Activated CD8-positive, alpha-beta T cell treated with anti-CD3 and anti-CD28 coated beads for 36 hours (primary cell): ENCODE measurements at regions of chr20 and their contacts with region 1.

Region 1: DNA sequence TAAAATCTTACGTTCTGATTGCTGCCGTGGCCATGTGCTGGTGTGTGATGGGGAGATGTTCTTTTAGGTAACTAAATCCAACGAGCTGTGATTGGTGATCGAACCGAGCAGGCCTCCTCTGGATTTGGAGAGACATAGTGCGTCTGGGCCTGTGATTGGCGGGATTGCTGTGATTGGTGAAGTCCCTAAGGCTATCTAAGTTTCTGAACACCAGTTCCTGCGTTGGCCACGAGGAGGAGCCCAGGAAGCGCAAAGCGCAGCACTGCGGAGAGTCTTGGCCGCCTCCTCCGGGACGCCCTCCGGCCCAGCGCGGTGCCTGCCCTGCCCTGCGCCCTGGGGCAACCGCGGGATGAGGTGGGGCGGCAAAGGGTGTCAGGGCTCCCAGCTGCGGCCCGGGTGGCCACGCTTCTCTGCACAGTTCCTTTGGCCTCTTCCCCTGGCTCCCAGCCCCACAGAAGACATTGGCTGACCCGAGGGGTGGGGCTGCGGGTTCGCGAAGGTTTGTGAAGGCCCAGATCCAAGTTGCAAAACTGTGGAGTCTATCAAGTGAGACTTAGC is 33.0 kb downstream of the HNF4A start:
- DNase-seq: peak; percentile 89
- ATAC-seq: peak; percentile 93
- H3K4me3 Mint-ChIP-seq: no peak overlapping the region
- H3K27ac Mint-ChIP-seq: no peak overlapping the region
- H3K4me1 Mint-ChIP-seq: peaks cover 2% of the 10 kb centered on the region
- H3K27me3 Mint-ChIP-seq: peaks cover 6% of the 10 kb centered on the region
- CTCF ChIP-seq: peak; percentile 91

Region 2: GRCh38 chr20:44370639-44371220 is 17.8 kb before region 1 on chr20:
- CTCF ChIA-PET with region 1: interaction called, 10 read pairs
- POLR2A ChIA-PET with region 1: interaction called, 3 read pairs
- intact Hi-C with region 1: no loop called
- DNase-seq: no peak
- ATAC-seq: no peak
- H3K4me3 Mint-ChIP-seq: no peak overlapping the region
- H3K27ac Mint-ChIP-seq: no peak overlapping the region
- H3K4me1 Mint-ChIP-seq: no peaks in the 10 kb centered on the region
- H3K27me3 Mint-ChIP-seq: no peaks in the 10 kb centered on the region
- CTCF ChIP-seq: no peak

Region 3: GRCh38 chr20:44431502-44432234 is 43.1 kb after region 1 on chr20:
- CTCF ChIA-PET with region 1: no interaction called
- POLR2A ChIA-PET with region 1: no interaction called
- intact Hi-C with region 1: no loop called
- DNase-seq: no peak
- ATAC-seq: no peak
- H3K4me3 Mint-ChIP-seq: no peak overlapping the region
- H3K27ac Mint-ChIP-seq: no peak overlapping the region
- H3K4me1 Mint-ChIP-seq: no peaks in the 10 kb centered on the region
- H3K27me3 Mint-ChIP-seq: peaks cover 6% of the 10 kb centered on the region
- CTCF ChIP-seq: no peak

Region 4: DNA sequence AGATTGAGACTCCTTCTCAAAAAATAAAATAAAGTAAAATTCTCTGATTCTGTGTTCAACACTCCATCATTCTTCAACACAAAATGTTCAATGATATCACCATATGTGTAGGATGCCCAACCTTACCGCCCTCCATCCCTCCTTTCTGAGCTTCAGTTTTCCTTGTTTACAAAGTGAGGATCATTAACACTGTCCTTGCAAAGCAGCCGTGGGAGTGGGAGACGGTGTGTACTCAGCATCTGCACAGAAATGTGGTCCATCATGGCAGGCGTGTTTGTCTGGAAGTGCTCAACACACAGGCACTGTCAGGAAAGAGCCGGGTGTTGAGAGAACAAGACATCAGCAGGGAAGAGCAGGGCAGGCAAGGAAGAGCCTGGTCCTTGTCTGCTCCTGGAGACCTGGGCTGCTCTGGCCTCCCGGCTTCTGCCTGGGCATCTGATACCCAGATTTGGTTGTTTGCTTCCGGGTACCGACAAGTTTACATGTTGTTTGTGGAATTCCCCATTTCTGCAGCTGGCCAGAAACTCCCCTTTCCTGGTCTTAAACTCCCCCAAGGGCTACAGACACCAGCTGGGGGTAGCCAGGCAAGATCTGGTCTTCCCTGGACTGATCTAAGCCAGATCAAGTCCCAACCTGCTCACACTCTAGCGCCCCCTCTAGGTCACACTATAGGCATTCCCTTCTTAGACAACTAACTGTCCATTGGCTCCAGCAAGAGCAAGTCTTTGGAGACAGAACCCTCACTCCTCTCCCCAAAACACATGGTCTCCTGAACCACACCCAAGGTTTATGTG is 60.4 kb after region 1 on chr20:
- CTCF ChIA-PET with region 1: no interaction called
- POLR2A ChIA-PET with region 1: no interaction called
- intact Hi-C with region 1: loop called (anchors 5 kb)
- DNase-seq: peak; percentile 28
- ATAC-seq: no peak
- H3K4me3 Mint-ChIP-seq: no peak overlapping the region
- H3K27ac Mint-ChIP-seq: no peak overlapping the region
- H3K4me1 Mint-ChIP-seq: no peaks in the 10 kb centered on the region
- H3K27me3 Mint-ChIP-seq: no peaks in the 10 kb centered on the region
- CTCF ChIP-seq: peak; percentile 39